ENCODE measurements at regions of chr3 and their contacts with region 1.

Region 1: DNA sequence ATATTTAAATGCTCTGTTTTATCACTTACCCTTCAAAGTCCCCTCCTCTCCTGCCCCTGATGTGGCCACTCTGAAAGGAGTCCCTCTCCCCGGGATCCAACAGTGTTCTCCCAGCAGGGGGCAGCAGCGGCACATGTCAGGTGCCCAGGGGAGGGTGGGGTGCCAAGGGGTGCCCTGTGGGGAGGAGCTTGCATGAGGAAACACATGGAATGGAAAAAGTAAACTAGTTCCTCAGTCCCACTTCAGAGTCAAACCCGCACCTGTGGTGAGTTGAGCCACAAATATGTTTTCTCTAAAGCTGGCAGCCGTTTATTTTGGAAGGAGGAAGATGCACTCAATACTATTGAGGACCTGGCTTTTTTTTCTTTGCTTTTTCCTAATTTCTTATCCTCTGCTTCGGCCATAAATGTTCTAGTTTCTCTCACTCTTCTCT is 30.1 kb upstream of the NRROS start:
- DNase-seq: peak; percentile 95
- ATAC-seq: peak; percentile 98
- H3K4me3 Mint-ChIP-seq: no peak overlapping the region
- H3K27ac Mint-ChIP-seq: no peak overlapping the region
- H3K4me1 Mint-ChIP-seq: peaks cover 17% of the 10 kb centered on the region
- H3K27me3 Mint-ChIP-seq: no peaks in the 10 kb centered on the region
- CTCF ChIP-seq: peak; percentile 79

Region 2: DNA sequence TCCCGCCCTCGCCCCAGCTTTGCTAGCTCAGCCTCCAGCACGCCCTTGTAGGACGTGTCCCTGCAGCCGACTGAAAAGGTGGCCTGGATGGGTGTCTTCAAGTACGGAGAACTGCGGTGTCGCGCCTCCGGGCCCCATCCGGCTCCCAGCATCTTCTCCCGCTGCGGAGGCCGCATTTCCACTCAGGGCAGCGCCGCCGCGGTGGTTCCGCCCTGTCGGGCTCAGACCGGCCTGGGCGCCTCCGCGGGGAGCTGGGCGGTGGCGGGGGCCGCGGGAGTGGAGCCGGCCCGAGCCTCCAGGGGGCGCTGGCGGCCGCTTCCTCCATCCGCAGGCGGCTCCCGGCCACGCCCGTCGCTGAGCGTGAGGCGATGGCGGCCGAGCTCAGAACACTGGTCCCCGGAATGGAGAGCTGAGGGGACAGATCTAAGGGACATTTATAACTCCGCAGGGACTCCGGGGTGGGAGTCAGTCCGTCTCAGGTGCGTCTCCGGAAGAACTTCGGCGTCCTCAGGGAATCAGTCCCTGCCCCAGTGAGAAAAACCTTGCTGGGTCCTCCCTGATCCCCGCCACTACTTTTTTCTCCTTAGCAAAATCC is 80.6 kb before region 1 on chr3:
- CTCF ChIA-PET with region 1: interaction called, 12 read pairs
- POLR2A ChIA-PET with region 1: no interaction called
- DNase-seq: peak; percentile 87
- ATAC-seq: peak; percentile 89
- H3K4me3 Mint-ChIP-seq: peak overlapping the region; percentile 53
- H3K27ac Mint-ChIP-seq: no peak overlapping the region
- H3K4me1 Mint-ChIP-seq: peaks cover 12% of the 10 kb centered on the region
- H3K27me3 Mint-ChIP-seq: peaks cover 11% of the 10 kb centered on the region
- CTCF ChIP-seq: peak; percentile 81

Region 3: DNA sequence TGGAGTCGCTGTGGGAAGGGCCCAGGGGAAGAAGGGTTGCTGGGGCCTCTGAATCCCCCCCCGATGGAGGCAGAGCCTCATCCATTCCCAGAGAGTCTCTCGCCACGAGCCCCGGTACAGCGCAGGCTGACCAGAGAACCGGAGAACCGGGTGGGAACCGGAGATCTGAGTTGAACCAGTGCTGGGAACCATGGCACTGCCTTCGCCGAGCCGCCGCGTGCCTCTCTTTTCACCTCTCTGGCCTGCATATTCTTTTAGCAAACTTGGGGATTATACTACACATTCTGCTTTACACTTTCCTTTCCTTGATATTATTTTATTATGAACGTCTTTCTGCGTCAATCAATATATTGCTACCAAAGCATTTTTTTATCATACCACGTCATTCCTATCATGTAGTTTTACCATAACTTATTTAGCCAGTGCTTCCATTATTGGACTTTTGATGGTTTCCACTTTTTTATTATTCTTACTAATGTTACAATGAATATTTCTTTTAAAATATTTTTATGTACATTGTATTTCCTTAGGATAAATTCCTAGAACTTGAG is 37.4 kb after region 1 on chr3:
- CTCF ChIA-PET with region 1: interaction called, 10 read pairs
- POLR2A ChIA-PET with region 1: no interaction called
- DNase-seq: no peak
- ATAC-seq: no peak
- H3K4me3 Mint-ChIP-seq: no peak overlapping the region
- H3K27ac Mint-ChIP-seq: no peak overlapping the region
- H3K4me1 Mint-ChIP-seq: peaks cover 63% of the 10 kb centered on the region
- H3K27me3 Mint-ChIP-seq: no peaks in the 10 kb centered on the region
- CTCF ChIP-seq: no peak

Region 4: DNA sequence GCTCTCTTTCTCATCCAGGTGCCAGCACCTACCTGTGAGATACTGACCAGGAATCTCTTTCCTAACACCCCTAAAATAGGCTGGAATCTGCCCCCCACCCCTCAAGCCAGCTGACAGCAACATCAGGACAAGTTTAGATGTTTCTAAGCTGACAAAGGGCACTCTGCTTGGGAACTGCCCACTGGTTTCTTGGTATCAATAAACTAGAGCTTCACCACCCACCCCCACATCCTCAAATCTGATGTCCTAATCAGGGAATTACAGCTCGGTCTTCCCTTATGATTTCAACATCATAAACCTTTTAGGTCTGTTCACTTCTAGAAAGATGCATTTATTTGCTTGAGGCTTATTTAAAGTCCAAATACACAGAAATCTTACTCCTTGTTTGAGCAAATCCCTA is 68.0 kb after region 1 on chr3:
- CTCF ChIA-PET with region 1: interaction called, 12 read pairs
- POLR2A ChIA-PET with region 1: no interaction called
- DNase-seq: no peak
- ATAC-seq: no peak
- H3K4me3 Mint-ChIP-seq: no peak overlapping the region
- H3K27ac Mint-ChIP-seq: no peak overlapping the region
- H3K4me1 Mint-ChIP-seq: no peaks in the 10 kb centered on the region; the same call in 1 of the 2 replicates
- H3K27me3 Mint-ChIP-seq: no peaks in the 10 kb centered on the region
- CTCF ChIP-seq: no peak

Region 5: DNA sequence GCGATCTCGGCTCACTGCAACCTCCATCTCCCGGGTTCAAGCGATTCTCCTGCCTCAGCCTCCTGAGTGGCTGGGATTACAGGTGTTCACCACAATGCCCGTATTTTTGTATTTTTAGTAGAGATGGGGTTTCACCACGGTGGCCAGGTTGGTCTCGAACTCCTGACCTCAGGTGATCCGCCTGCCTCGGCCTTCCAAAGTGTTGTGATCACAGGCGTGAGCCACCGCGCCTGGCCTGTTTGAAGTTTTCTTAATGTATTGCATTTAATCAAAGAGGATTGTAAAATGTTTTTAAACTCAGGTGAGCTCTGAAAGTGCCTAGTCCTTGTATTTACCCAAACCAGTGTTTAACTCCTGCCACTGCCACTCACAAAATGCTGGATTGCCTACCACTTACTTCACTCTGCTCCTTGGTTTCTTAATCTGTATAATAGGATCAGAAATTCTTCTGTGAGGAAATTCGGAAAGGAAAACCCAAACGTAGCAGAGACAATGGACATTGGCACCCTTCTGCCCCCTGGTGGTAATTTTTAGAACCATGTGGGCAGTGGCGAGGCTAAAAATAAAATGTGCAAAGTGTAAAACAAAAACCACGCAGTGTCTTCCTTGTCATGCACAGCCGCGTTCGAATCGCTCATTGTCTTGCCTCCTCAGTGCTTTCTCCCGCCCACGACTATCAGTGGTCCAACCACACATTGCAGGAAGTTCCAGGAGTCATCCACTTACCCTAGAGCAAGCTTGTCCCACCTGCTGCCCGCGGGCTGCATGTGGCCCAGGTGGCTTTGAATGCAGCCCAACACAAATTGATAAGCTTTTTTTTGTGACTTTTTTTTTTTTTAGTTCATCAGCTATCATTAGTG is 75.4 kb after region 1 on chr3:
- CTCF ChIA-PET with region 1: interaction called, 67 read pairs
- POLR2A ChIA-PET with region 1: no interaction called
- DNase-seq: peak; percentile 57
- ATAC-seq: peak; percentile 71
- H3K4me3 Mint-ChIP-seq: no peak overlapping the region
- H3K27ac Mint-ChIP-seq: peak overlapping the region; percentile 17; the same call in 1 of the 2 replicates
- H3K4me1 Mint-ChIP-seq: peaks cover 21% of the 10 kb centered on the region
- H3K27me3 Mint-ChIP-seq: no peaks in the 10 kb centered on the region; the same call in 1 of the 2 replicates
- CTCF ChIP-seq: peak; percentile 76

Region 6: DNA sequence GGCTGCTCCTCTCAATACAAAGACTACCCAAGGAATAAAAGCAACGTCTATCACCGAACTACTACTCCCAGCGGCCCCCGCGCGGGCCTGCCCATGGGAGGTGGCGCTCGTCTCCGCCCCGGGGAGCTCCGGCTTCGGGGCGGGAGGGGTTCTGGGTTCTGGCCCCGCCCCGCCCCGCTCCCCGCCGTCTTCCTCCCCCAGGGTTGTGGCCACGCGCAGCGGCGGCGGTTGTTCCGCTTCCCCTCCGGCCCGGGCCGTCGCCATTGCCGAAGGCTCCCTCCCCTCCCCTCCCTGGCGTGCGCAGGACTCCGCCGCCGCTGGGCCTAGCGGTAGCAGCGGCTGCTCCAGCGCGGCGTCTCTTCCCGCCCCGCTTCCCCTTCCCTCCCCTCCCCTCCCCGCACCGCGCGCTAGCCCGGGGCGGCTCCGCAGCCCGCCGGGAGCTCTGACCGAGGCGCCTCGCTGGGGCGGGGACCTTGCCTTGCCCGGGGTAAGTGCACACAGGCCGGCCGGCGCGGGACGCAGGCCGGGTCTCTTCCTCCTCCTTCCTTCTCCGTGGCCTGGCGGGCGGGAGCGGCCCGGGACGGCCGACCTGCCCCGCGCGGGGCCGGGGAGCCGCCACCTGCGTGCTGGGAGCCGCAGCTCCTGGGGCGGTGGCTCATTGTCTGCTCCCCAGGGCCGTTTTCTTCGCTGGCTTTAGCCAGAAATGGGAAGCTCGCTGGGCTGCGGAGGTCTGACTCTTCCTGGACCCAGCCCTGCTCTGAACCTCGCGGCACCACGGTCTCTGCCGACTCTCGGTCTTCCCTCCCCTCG is 130.5 kb after region 1 on chr3 and contains the start of gene PAK2:
- CTCF ChIA-PET with region 1: interaction called, 10 read pairs
- POLR2A ChIA-PET with region 1: no interaction called
- DNase-seq: peak; percentile 90
- ATAC-seq: peak; percentile 93
- H3K4me3 Mint-ChIP-seq: peak within 1 kb of the TSS; percentile 100
- H3K27ac Mint-ChIP-seq: peak within 1 kb of the TSS; percentile 100
- H3K4me1 Mint-ChIP-seq: peaks cover 28% of the 10 kb centered on the region
- H3K27me3 Mint-ChIP-seq: no peaks in the 10 kb centered on the region
- CTCF ChIP-seq: no peak
- total RNA-seq, gene PAK2: 47.3 to 50.7 TPM (median 50.0 TPM) in 3 replicates

Region 7: GRCh38 chr3:196842567-196843434 is 233.4 kb after region 1 on chr3:
- CTCF ChIA-PET with region 1: no interaction called
- POLR2A ChIA-PET with region 1: no interaction called
- DNase-seq: no peak
- ATAC-seq: no peak
- H3K4me3 Mint-ChIP-seq: no peak overlapping the region
- H3K27ac Mint-ChIP-seq: no peak overlapping the region
- H3K4me1 Mint-ChIP-seq: no peaks in the 10 kb centered on the region
- H3K27me3 Mint-ChIP-seq: no peaks in the 10 kb centered on the region
- CTCF ChIP-seq: no peak